ENCODE measurements at regions of chr14 and their contacts with region 1.

Region 1: GRCh38 chr14:20343092-20343861 is at the start of gene PARP2:
- DNase-seq: peak; percentile 98 to 100
- H3K4me3 ChIP-seq: peak within 1 kb of the TSS; percentile 86 to 97 (median 88)
- H3K27ac ChIP-seq: peak within 1 kb of the TSS; percentile 83
- H3K4me1 ChIP-seq: no peaks in the 10 kb centered on the region; a peak in 1 of 7 replicates
- H3K27me3 ChIP-seq: no peaks in the 10 kb centered on the region
- CTCF ChIP-seq: no peak
- EP300 ChIP-seq: no peak; a peak in 1 of 3 replicates
- POLR2A ChIP-seq: peak; percentile 97 to 100
- RAD21 ChIP-seq: 0 out of 4 replicates have a peak, but pooled peaks of 1 of the 2 experiments have one; percentile 0
- total RNA-seq, gene PARP2: 41.7 and 42.9 TPM in 2 replicates

Region 2: DNA sequence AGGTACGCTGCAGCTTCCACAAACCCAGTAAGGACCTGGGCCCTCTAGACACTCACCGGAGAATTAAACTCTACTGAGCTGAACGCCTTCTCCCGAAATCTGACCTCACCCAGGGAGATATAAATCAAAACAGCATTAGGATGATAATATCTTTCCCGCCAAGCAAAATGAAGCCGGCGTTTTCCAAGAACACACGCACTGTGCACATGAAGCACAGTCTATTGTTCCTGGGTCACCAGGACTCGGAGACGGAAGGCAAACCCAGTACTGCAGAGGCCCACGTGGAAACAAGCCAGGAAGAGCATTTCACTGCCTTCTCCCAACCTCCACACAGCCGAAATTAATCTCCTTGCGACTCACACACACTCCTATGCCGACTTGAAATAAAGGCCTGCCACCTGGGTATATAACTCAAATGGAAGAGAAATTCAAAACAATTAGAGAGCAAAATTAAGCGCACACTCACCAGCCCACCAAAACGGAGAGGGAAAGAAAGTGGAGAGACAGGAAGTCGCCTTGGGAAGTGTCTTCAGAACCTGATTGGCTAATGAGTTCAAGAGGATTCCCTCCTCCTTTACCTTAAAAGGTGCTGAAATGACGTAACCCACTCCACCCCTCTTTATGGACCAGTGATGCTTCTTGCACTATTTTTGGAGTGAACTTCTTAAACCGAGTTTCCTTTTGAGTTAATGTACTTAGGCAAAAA is 10.3 kb before region 1 on chr14 and contains the start of gene CCNB1IP1:
- CTCF ChIA-PET with region 1: interaction called, 6 read pairs
- POLR2A ChIA-PET with region 1: interaction called, 215 read pairs
- DNase-seq: peak; percentile 13 to 61
- H3K4me3 ChIP-seq: peak within 1 kb of the TSS; percentile 85 to 98 (median 94)
- H3K27ac ChIP-seq: peak within 1 kb of the TSS; percentile 87
- H3K4me1 ChIP-seq: peaks cover 0 to 3% (median 0%) of the 10 kb centered on the region in 4 experiments; a peak in 3 of 7 replicates
- H3K27me3 ChIP-seq: no peaks in the 10 kb centered on the region
- CTCF ChIP-seq: no peak
- EP300 ChIP-seq: no peak
- POLR2A ChIP-seq: peak; percentile 81 to 99
- RAD21 ChIP-seq: no peak
- total RNA-seq, gene CCNB1IP1: 156 and 173 TPM in 2 replicates

Region 3: DNA sequence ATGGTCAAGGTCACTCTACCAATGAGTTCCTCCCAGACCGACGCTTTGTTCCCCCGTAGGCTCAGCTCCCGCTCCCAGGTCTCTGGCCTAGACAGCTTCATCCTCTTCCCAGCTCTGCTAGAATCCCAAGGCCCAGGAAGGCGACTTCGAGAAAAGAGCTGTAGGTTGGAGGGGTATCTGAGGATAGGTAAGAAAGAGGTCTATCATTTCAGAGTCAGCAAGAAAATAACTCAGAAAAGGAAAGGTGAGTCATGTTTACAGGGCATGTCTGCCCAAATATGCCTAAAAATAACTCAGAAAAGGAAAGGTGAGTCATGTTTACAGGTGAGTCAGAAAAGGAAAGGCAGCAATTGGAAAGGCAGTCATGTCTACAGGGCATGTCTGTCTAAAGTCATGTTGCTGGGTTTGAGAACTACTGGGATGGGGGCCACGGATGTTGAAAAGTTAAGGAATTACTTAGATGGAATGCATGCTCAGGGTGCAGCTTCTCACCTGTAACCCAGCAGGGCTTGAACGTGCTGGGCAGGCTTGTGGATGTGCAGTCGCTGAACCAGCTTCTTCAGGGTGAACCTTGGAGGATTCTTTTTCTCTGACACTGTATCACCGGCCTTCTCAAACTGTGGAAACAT is 57.8 kb after region 1 on chr14:
- CTCF ChIA-PET with region 1: interaction called, 3 read pairs
- POLR2A ChIA-PET with region 1: interaction called, 12 read pairs
- DNase-seq: no peak
- H3K4me3 ChIP-seq: no peak overlapping the region
- H3K27ac ChIP-seq: no peak overlapping the region
- H3K4me1 ChIP-seq: no peaks in the 10 kb centered on the region
- H3K27me3 ChIP-seq: no peaks in the 10 kb centered on the region
- CTCF ChIP-seq: no peak
- EP300 ChIP-seq: no peak
- POLR2A ChIP-seq: no peak
- RAD21 ChIP-seq: no peak

Region 4: GRCh38 chr14:20461274-20462001 is 118.2 kb after region 1 on chr14 and contains the start of gene PIP4P1:
- CTCF ChIA-PET with region 1: no interaction called
- POLR2A ChIA-PET with region 1: interaction called, 69 read pairs
- DNase-seq: peak; percentile 94 to 100
- H3K4me3 ChIP-seq: peak within 1 kb of the TSS; percentile 71 to 87 (median 78)
- H3K27ac ChIP-seq: peak within 1 kb of the TSS; percentile 85
- H3K4me1 ChIP-seq: peaks cover 0 to 7% (median 2%) of the 10 kb centered on the region in 4 experiments; a peak in 4 of 7 replicates
- H3K27me3 ChIP-seq: no peaks in the 10 kb centered on the region; a peak in 1 of 7 replicates
- CTCF ChIP-seq: no peak
- EP300 ChIP-seq: no peak
- POLR2A ChIP-seq: peak in 1 of 2 experiments; percentile 19; a peak in 1 of 3 replicates
- RAD21 ChIP-seq: no peak
- total RNA-seq, gene PIP4P1: 29.5 and 33.4 TPM in 2 replicates